ENCODE measurements at regions of chr20 and their contacts with region 1.

Region 1: GRCh38 chr20:50690634-50691572 is at the start of gene RIPOR3:
- DNase-seq: no peak
- ATAC-seq: peak; percentile 57
- H3K4me3 ChIP-seq: peak within 1 kb of the TSS; percentile 20
- H3K27ac ChIP-seq: peak within 1 kb of the TSS; percentile 54
- H3K4me1 ChIP-seq: peaks cover 25% of the 10 kb centered on the region
- H3K27me3 ChIP-seq: no peaks in the 10 kb centered on the region
- CTCF ChIP-seq: no peak
- POLR2A ChIP-seq: no peak
- RAD21 ChIP-seq: no peak
- total RNA-seq, gene RIPOR3: 0.28 and 0.54 TPM in 2 replicates

Region 2: GRCh38 chr20:50588034-50588611 is 102.8 kb before region 1 on chr20:
- CTCF ChIA-PET with region 1: no interaction called
- POLR2A ChIA-PET with region 1: interaction called, 13 read pairs
- dilution Hi-C with region 1: no loop called
- in situ Hi-C with region 1: no loop called
- intact Hi-C with region 1: no loop called
- DNase-seq: peak; percentile 58
- ATAC-seq: peak; percentile 67
- H3K4me3 ChIP-seq: no peak overlapping the region
- H3K27ac ChIP-seq: no peak overlapping the region
- H3K4me1 ChIP-seq: no peaks in the 10 kb centered on the region
- H3K27me3 ChIP-seq: no peaks in the 10 kb centered on the region
- CTCF ChIP-seq: peak; percentile 93
- POLR2A ChIP-seq: 0 out of 2 replicates have a peak, but pooled peaks have one; percentile 23
- RAD21 ChIP-seq: peak; percentile 68

Region 3: DNA sequence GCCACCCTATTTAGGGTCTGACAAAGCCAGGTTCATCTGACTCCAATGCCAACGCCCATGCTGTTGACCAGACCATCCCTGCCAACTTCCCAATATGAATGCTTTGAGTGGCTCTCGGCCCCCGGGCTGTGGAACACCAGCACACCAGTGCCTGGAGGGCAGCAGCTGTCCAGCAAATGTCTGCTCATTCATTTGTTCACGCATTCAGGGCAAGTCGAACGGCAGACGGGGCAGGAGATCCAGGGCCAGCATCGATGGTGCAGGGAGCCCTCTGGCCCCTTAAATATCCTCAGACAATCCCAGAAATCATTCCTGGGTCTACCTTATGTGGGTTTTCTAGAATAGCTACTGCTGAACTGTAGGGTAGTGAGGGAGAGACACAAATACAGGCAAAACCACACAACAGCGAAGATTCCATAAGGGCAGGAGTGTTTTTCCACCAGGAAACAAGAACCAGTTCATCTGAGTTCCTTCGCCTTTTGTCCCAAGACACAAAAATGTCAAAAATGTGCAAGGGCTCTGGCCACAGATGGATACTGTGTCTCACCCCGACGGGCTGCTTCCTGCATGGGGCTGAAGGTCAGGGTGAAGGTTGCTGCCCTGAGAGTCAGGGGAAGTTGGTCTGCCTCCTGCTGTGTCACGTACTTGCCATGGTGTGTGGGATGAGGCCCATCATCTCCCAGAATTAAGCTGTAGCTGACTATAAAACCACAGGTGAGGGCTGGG is 15.1 kb before region 1 on chr20:
- CTCF ChIA-PET with region 1: no interaction called
- POLR2A ChIA-PET with region 1: interaction called, 11 read pairs
- dilution Hi-C with region 1: no loop called
- in situ Hi-C with region 1: no loop called
- intact Hi-C with region 1: no loop called
- DNase-seq: no peak
- ATAC-seq: peak; percentile 43; the same call in 1 of the 2 replicates
- H3K4me3 ChIP-seq: no peak overlapping the region
- H3K27ac ChIP-seq: no peak overlapping the region
- H3K4me1 ChIP-seq: peaks cover 18% of the 10 kb centered on the region
- H3K27me3 ChIP-seq: no peaks in the 10 kb centered on the region
- CTCF ChIP-seq: no peak
- POLR2A ChIP-seq: no peak
- RAD21 ChIP-seq: no peak

Region 4: GRCh38 chr20:50731055-50731871 is 40.4 kb after region 1 on chr20 and contains the start of gene PARD6B:
- CTCF ChIA-PET with region 1: no interaction called
- POLR2A ChIA-PET with region 1: no interaction called
- dilution Hi-C with region 1: no loop called
- in situ Hi-C with region 1: no loop called
- intact Hi-C with region 1: loop called (anchors 2 kb)
- DNase-seq: peak; percentile 92
- ATAC-seq: peak; percentile 98
- H3K4me3 ChIP-seq: peak within 1 kb of the TSS; percentile 80
- H3K27ac ChIP-seq: peak within 1 kb of the TSS; percentile 20; the same call in 1 of the 2 replicates
- H3K4me1 ChIP-seq: peaks cover 3% of the 10 kb centered on the region
- H3K27me3 ChIP-seq: peaks cover 3% of the 10 kb centered on the region; the same call in 1 of the 2 replicates
- CTCF ChIP-seq: no peak
- POLR2A ChIP-seq: no peak
- RAD21 ChIP-seq: no peak
- total RNA-seq, gene PARD6B: 0.90 and 1.4 TPM in 2 replicates